ENCODE measurements at regions of chr1 and their contacts with region 1.

Region 1: GRCh38 chr1:146012737-146013403 is 8.7 kb downstream of the HJV start:
- DNase-seq: peak; percentile 96
- ATAC-seq: peak; percentile 79
- H3K4me3 ChIP-seq: no peak overlapping the region
- H3K27ac ChIP-seq: no peak overlapping the region
- H3K4me1 ChIP-seq: peaks cover 4% of the 10 kb centered on the region; the same call in 1 of the 2 replicates
- H3K27me3 ChIP-seq: no peaks in the 10 kb centered on the region
- CTCF ChIP-seq: peak; percentile 98

Region 2: GRCh38 chr1:145720877-145721671 is 291.8 kb before region 1 on chr1:
- CTCF ChIA-PET with region 1: no interaction called
- POLR2A ChIA-PET with region 1: no interaction called
- intact Hi-C with region 1: loop called (anchors 10 kb)
- DNase-seq: peak; percentile 83
- ATAC-seq: peak; percentile 90
- H3K4me3 ChIP-seq: peak overlapping the region; percentile 53
- H3K27ac ChIP-seq: peak overlapping the region; percentile 72
- H3K4me1 ChIP-seq: peaks cover 12% of the 10 kb centered on the region
- H3K27me3 ChIP-seq: no peaks in the 10 kb centered on the region
- CTCF ChIP-seq: peak; percentile 97

Region 3: DNA sequence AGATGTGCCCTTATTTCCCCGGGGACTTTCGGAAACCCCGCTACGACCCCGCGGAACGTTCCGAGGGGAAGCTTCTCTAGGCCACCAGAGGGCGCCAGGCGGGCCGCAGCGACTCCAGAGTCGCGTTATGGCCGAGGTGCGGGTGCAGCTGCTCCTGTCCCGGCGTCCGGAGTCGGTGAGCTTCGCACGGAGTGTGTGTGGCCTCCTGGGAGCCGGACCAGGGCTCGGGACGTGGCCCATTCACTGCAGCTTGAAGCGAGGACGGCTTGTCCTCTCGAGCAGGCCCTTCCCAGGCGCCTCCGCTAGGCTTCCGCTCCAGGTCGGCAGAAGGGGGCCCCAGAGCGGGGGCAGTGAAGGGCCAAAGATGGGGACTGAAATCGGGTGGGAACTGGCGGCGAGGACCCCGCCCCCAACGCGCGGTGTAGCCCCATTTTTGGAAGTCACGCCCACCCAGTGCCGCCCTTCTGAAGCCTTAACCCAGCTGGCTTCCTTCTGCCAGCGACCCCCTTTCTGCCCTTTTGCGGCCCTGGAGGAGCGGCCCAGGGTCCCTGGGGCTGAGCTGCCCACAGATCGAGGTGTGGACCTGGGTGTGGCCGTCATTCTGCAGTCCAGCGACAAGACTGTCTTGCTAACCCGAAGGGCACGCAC is 167.2 kb before region 1 on chr1 and contains the start of gene NUDT17:
- CTCF ChIA-PET with region 1: interaction called, 6 read pairs
- POLR2A ChIA-PET with region 1: no interaction called
- intact Hi-C with region 1: loop called (anchors 1 kb)
- DNase-seq: peak; percentile 78
- ATAC-seq: peak; percentile 77
- H3K4me3 ChIP-seq: peak within 1 kb of the TSS; percentile 66
- H3K27ac ChIP-seq: no peak within 1 kb of the TSS
- H3K4me1 ChIP-seq: peaks cover 5% of the 10 kb centered on the region; the same call in 1 of the 2 replicates
- H3K27me3 ChIP-seq: no peaks in the 10 kb centered on the region
- CTCF ChIP-seq: peak; percentile 98
- total RNA-seq, gene NUDT17: 2.4 and 3.0 TPM in 2 replicates

Region 4: DNA sequence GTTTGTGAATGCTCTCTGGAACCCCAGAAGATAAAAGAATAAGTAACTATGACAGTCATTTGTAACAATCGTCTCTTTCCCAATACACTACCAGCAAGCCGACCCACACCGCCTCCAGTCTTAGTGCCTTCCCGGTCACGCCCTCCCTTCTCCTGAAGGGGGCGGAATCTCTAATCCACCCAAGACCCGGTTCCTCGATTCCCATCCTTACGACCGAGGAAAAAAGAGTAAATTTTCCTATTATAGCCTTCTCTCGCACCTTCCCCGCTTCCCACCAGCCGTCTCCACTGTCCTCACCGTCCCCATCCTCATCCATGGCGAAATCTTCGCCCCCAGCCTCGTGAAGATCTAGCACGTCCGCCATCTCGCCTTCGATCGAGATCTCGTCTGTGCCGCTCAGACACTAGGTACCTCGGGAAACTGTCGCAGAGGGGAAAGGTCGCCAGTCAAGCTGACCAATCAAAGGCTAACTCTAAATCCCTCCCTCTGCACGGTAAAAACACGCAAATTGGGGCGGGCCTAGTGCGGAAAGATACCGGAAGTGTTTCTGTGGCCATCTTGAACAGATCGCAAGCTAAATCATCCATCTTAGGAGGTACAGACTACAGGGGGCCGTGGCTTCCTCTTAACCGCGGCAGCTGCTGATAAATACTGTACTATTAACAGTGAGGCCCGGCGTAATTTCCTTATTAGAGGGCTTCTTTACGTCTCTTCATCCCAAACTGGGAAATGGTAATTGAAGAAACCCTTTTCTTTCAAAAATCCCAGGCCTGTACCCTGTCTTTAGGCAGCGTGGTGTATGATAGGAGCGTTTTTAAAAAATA is 85.6 kb before region 1 on chr1 and contains the start of gene RBM8A:
- CTCF ChIA-PET with region 1: no interaction called
- POLR2A ChIA-PET with region 1: no interaction called
- intact Hi-C with region 1: loop called (anchors 1 kb)
- DNase-seq: peak; percentile 99
- ATAC-seq: peak; percentile 99
- H3K4me3 ChIP-seq: peak within 1 kb of the TSS; percentile 75
- H3K27ac ChIP-seq: peak within 1 kb of the TSS; percentile 83
- H3K4me1 ChIP-seq: peaks cover 13% of the 10 kb centered on the region
- H3K27me3 ChIP-seq: no peaks in the 10 kb centered on the region
- CTCF ChIP-seq: peak; percentile 81
- total RNA-seq, gene RBM8A: 459 and 482 TPM in 2 replicates

Region 5: GRCh38 chr1:145963995-145964901 is 48.6 kb before region 1 on chr1 and contains the starts of genes ANKRD34A and POLR3GL:
- CTCF ChIA-PET with region 1: no interaction called
- POLR2A ChIA-PET with region 1: no interaction called
- intact Hi-C with region 1: loop called (anchors 1 kb)
- DNase-seq: peak; percentile 99
- ATAC-seq: peak; percentile 84
- H3K4me3 ChIP-seq: peak within 1 kb of the TSS; percentile 76
- H3K27ac ChIP-seq: peak within 1 kb of the TSS; percentile 3; the same call in 1 of the 2 replicates
- H3K4me1 ChIP-seq: peaks cover 35% of the 10 kb centered on the region
- H3K27me3 ChIP-seq: no peaks in the 10 kb centered on the region
- CTCF ChIP-seq: no peak
- total RNA-seq, gene ANKRD34A: 0.29 and 2.8 TPM in 2 replicates
- total RNA-seq, gene POLR3GL: 3.7 and 8.4 TPM in 2 replicates